Heart left ventricle (tissue), 16 donors: ENCODE measurements at regions of chr15 and their contacts with region 1.

Region 1: GRCh38 chr15:78872972-78873792 is 492 bp downstream of the MORF4L1 start:
- DNase-seq: peak; percentile 85 to 91 (median 89)
- ATAC-seq: peak; percentile 57 to 78 (median 76)
- H3K4me3 ChIP-seq: peak overlapping the region; percentile 61 to 100 (median 95)
- H3K27ac ChIP-seq: peak overlapping the region; percentile 96 to 100 (median 100)
- H3K4me1 ChIP-seq: peaks cover 3 to 47% (median 38%) of the 10 kb centered on the region in 12 donors
- H3K27me3 ChIP-seq: no peaks in the 10 kb centered on the region
- CTCF ChIP-seq: peak; percentile 7 to 61 (median 42)
- POLR2A ChIP-seq: peak; percentile 67 to 84

Region 2: GRCh38 chr15:78481917-78482316 is 391.3 kb before region 1 on chr15:
- intact Hi-C with region 1: no loop called
- DNase-seq: no peak
- ATAC-seq: no peak
- H3K4me3 ChIP-seq: no peak overlapping the region
- H3K27ac ChIP-seq: no peak overlapping the region
- H3K4me1 ChIP-seq: peaks cover 0 to 7% (median 0%) of the 10 kb centered on the region in 12 donors
- H3K27me3 ChIP-seq: no peaks in the 10 kb centered on the region
- CTCF ChIP-seq: no peak
- POLR2A ChIP-seq: no peak

Region 3: DNA sequence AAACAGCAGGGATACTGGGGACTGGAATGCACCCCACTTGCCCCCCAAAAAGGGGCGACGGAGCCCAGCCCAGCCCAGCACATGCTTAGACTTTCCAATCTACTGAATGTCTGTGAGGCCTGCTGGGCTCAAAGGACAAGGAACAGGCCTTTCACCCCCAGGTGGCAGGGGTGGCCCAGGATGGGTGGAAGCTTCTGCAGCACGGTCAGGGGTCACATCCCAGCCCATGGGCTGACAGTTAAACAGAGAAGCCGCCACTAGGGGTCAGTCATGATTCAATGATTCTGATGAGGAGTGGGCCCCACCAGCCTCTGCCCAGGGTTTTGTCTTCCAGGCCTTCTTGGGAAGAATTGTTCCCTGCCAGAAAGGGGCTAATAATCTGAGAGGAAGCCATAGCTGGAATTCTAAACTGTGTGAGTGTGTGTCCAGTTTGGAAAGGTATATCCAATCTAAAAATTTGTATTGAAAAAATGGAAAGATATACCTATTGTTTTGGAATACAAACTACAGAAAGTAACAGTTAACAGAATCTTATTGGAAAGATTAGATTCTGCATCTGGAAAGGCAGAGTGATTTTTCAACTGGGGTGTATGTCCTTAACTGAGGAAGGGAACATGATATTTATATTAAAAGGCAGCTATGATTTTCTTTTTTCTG is 234.4 kb before region 1 on chr15:
- intact Hi-C with region 1: no loop called
- DNase-seq: peak in 3 of 5 donors; percentile 42 to 48 (median 47)
- ATAC-seq: peak in 3 of 4 donors; percentile 56 to 73 (median 70)
- H3K4me3 ChIP-seq: no peak overlapping the region
- H3K27ac ChIP-seq: no peak overlapping the region
- H3K4me1 ChIP-seq: peaks cover 0 to 16% (median 6%) of the 10 kb centered on the region in 12 donors
- H3K27me3 ChIP-seq: peaks cover 0 to 15% (median 6%) of the 10 kb centered on the region in 9 donors
- CTCF ChIP-seq: peak; percentile 48 to 76 (median 61)
- POLR2A ChIP-seq: no peak

Region 4: GRCh38 chr15:78750566-78750965 is 122.6 kb before region 1 on chr15:
- intact Hi-C with region 1: loop called in 2 of 10 experiments (anchors 5 to 10 kb)
- DNase-seq: peak in 2 of 5 donors; percentile 32 to 40
- ATAC-seq: peak; percentile 58 to 68 (median 64)
- H3K4me3 ChIP-seq: peak overlapping the region in 9 of 12 donors; percentile 8 to 46 (median 34)
- H3K27ac ChIP-seq: peak overlapping the region in 10 of 12 donors; percentile 7 to 82 (median 77)
- H3K4me1 ChIP-seq: peaks cover 0 to 37% (median 9%) of the 10 kb centered on the region in 12 donors
- H3K27me3 ChIP-seq: no peaks in the 10 kb centered on the region
- CTCF ChIP-seq: no peak
- POLR2A ChIP-seq: no peak

Region 5: GRCh38 chr15:78761891-78762385 is 111.2 kb before region 1 on chr15:
- intact Hi-C with region 1: loop called in 3 of 10 experiments (anchors 5 to 10 kb)
- DNase-seq: peak in 1 of 5 donors; percentile 21
- ATAC-seq: peak in 1 of 4 donors; percentile 0
- H3K4me3 ChIP-seq: no peak overlapping the region
- H3K27ac ChIP-seq: peak overlapping the region in 10 of 12 donors; percentile 33 to 64 (median 42)
- H3K4me1 ChIP-seq: peaks cover 16 to 63% (median 42%) of the 10 kb centered on the region in 12 donors
- H3K27me3 ChIP-seq: no peaks in the 10 kb centered on the region
- CTCF ChIP-seq: no peak
- POLR2A ChIP-seq: no peak

Region 6: GRCh38 chr15:78767331-78767951 is 105.7 kb before region 1 on chr15:
- intact Hi-C with region 1: loop called in 1 of 10 experiments (anchors 10 kb)
- DNase-seq: peak in 4 of 5 donors; percentile 6 to 38 (median 14)
- ATAC-seq: no peak
- H3K4me3 ChIP-seq: no peak overlapping the region
- H3K27ac ChIP-seq: no peak overlapping the region
- H3K4me1 ChIP-seq: peaks cover 0 to 12% (median 0%) of the 10 kb centered on the region in 12 donors
- H3K27me3 ChIP-seq: no peaks in the 10 kb centered on the region
- CTCF ChIP-seq: no peak
- POLR2A ChIP-seq: no peak

Region 7: GRCh38 chr15:78811124-78811824 is 61.9 kb before region 1 on chr15 and contains the start of gene ADAMTS7:
- intact Hi-C with region 1: loop called in 5 of 10 experiments (anchors 2 to 10 kb)
- DNase-seq: peak; percentile 82 to 90 (median 84)
- ATAC-seq: peak; percentile 63 to 91 (median 83)
- H3K4me3 ChIP-seq: peak within 1 kb of the TSS; percentile 59 to 88 (median 80)
- H3K27ac ChIP-seq: peak within 1 kb of the TSS; percentile 15 to 91 (median 88)
- H3K4me1 ChIP-seq: peaks cover 2 to 34% (median 16%) of the 10 kb centered on the region in 12 donors
- H3K27me3 ChIP-seq: peaks cover 0 to 34% (median 0%) of the 10 kb centered on the region in 9 donors
- CTCF ChIP-seq: peak; percentile 49 to 88 (median 72)
- POLR2A ChIP-seq: no peak
- total RNA-seq, gene ADAMTS7: 8.0 to 29.9 (median 13.9) TPM

Region 8: GRCh38 chr15:78828920-78829319 is 44.3 kb before region 1 on chr15:
- intact Hi-C with region 1: loop called in 1 of 10 experiments (anchors 10 kb)
- DNase-seq: peak in 1 of 5 donors; percentile 19
- ATAC-seq: peak in 2 of 4 donors; percentile 21 to 41
- H3K4me3 ChIP-seq: no peak overlapping the region
- H3K27ac ChIP-seq: no peak overlapping the region
- H3K4me1 ChIP-seq: peaks cover 0 to 43% (median 10%) of the 10 kb centered on the region in 12 donors
- H3K27me3 ChIP-seq: peaks cover 0 to 3% (median 0%) of the 10 kb centered on the region in 9 donors
- CTCF ChIP-seq: no peak
- POLR2A ChIP-seq: no peak

Region 9: DNA sequence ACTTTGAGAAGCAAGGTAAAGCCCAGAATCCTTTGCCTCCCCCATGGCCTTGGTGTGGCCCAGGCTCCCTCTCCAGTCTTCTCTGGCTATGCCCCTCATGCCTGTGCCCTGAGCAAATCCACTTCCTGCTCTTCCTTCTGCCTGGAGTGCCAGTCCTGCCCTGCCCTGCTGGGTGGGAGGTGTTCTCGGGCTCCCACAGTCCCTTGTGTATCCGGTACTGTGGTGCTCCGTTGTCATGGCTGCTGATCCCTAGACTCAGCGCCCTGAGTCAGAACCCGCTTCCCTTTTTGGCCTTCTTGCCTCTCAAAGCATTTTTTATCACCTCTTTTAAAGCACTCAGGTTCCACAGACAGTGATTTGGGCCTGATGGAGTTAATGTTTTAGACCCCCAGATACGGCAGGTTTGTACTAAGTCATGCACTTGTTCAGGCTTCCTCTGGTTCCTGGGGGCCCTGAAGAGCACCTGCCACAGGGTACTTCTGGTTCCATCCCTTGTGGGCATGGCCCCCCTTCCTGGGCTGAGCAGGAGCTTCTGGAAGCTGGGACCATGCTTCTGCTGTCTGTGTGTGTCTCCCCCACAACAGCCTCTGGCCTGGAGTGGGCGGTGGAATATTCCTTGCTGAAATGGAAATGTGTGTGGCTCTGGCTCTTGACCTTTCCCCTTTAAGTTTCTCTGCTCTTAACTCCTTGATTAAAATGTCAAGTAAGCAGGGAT is 32.4 kb before region 1 on chr15:
- intact Hi-C with region 1: no loop called
- DNase-seq: peak in 1 of 5 donors; percentile 31
- ATAC-seq: peak in 1 of 4 donors; percentile 69
- H3K4me3 ChIP-seq: no peak overlapping the region
- H3K27ac ChIP-seq: no peak overlapping the region
- H3K4me1 ChIP-seq: peaks cover 0 to 2% (median 0%) of the 10 kb centered on the region in 12 donors
- H3K27me3 ChIP-seq: no peaks in the 10 kb centered on the region
- CTCF ChIP-seq: no peak
- POLR2A ChIP-seq: no peak

Region 10: DNA sequence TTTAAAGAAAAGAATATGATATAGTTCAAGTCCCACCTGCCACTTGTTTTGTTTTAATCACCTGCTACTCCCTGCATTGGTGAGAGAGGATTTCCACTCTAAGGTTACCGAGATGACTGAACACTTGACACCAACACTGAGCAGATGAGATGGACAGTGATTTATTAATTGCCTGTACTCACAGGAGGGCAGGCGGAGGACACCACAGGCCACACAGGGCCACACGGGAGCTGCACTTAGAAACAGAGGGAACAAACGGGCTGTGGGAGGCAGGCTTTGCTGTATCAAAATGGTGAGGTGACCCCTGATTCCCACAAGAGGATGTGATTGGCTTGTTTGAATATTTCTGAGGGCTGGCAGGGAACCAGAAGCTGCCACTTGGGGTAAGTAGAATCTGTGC is 569.7 kb after region 1 on chr15:
- intact Hi-C with region 1: no loop called
- DNase-seq: no peak
- ATAC-seq: no peak
- H3K4me3 ChIP-seq: no peak overlapping the region
- H3K27ac ChIP-seq: no peak overlapping the region
- H3K4me1 ChIP-seq: no peaks in the 10 kb centered on the region
- H3K27me3 ChIP-seq: no peaks in the 10 kb centered on the region
- CTCF ChIP-seq: no peak
- POLR2A ChIP-seq: no peak